ENCODE measurements at regions of chr7 and their contacts with region 1.

Region 1: GRCh38 chr7:92588561-92588960 is 1.6 kb downstream of the FAM133B start:
- DNase-seq: peak; percentile 12
- H3K4me3 Mint-ChIP-seq: peak overlapping the region; percentile 83
- H3K27ac Mint-ChIP-seq: peak overlapping the region; percentile 96
- H3K4me1 Mint-ChIP-seq: peaks cover 57% of the 10 kb centered on the region
- H3K27me3 Mint-ChIP-seq: peaks cover 5% of the 10 kb centered on the region

Region 2: GRCh38 chr7:92547579-92547978 is 41.0 kb before region 1 on chr7:
- CTCF ChIA-PET with region 1: no interaction called
- POLR2A ChIA-PET with region 1: no interaction called
- DNase-seq: no peak
- H3K4me3 Mint-ChIP-seq: no peak overlapping the region
- H3K27ac Mint-ChIP-seq: no peak overlapping the region
- H3K4me1 Mint-ChIP-seq: no peaks in the 10 kb centered on the region
- H3K27me3 Mint-ChIP-seq: peaks cover 2% of the 10 kb centered on the region

Region 3: DNA sequence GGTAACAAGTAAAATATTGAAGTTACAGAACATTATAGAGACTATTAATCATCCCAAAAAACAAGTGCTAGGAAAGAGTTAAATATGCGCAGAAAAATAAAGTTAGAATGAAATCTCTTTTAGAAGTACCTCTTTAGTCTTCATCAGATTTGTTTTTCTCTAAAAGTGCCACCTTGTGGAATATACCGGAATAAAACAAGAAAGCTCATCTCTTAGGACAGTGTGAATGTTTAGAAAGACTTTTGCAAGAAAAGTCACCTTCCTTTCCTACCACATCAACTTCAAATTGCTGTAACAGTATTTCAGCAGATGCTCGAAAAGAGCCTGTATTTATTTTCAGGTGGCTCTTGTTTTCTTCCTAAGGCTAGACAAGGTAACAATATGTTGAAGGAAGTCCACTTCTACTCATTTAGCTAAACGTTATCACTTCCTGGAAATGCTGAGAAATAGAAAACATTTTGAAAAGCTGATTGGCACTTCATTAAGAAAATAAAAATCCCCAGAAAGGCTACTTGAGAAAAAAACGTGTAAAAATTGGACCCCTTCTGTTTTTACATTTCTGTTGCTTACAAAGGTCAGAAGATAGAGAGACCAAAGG is 21.5 kb after region 1 on chr7:
- CTCF ChIA-PET with region 1: interaction called, 20 read pairs
- POLR2A ChIA-PET with region 1: no interaction called
- DNase-seq: no peak
- H3K4me3 Mint-ChIP-seq: no peak overlapping the region
- H3K27ac Mint-ChIP-seq: peak overlapping the region; percentile 54
- H3K4me1 Mint-ChIP-seq: peaks cover 26% of the 10 kb centered on the region
- H3K27me3 Mint-ChIP-seq: no peaks in the 10 kb centered on the region

Region 4: GRCh38 chr7:92625617-92626016 is 37.1 kb after region 1 on chr7:
- CTCF ChIA-PET with region 1: no interaction called
- POLR2A ChIA-PET with region 1: no interaction called
- DNase-seq: no peak
- H3K4me3 Mint-ChIP-seq: peak overlapping the region; percentile 17
- H3K27ac Mint-ChIP-seq: peak overlapping the region; percentile 90
- H3K4me1 Mint-ChIP-seq: peaks cover 68% of the 10 kb centered on the region
- H3K27me3 Mint-ChIP-seq: no peaks in the 10 kb centered on the region

Region 5: GRCh38 chr7:92868683-92869293 is 280.2 kb after region 1 on chr7:
- CTCF ChIA-PET with region 1: no interaction called
- POLR2A ChIA-PET with region 1: no interaction called
- DNase-seq: no peak
- H3K4me3 Mint-ChIP-seq: no peak overlapping the region
- H3K27ac Mint-ChIP-seq: no peak overlapping the region
- H3K4me1 Mint-ChIP-seq: peaks cover 2% of the 10 kb centered on the region
- H3K27me3 Mint-ChIP-seq: peaks cover 2% of the 10 kb centered on the region